Lower leg skin (tissue), 4 donors: ENCODE measurements at regions of chr2 and their contacts with region 1.

Region 1: GRCh38 chr2:217510771-217511291 is 492.0 kb downstream of the TNS1 start:
- DNase-seq: peak in 1 of 2 donors; percentile 67
- H3K4me3 ChIP-seq: no peak overlapping the region
- CTCF ChIP-seq: peak in 1 of 3 donors; percentile 75
- POLR2A ChIP-seq: no peak

Region 2: GRCh38 chr2:216698895-216699294 is 811.9 kb before region 1 on chr2:
- intact Hi-C with region 1: loop called (anchors 5 kb)
- DNase-seq: no peak
- H3K4me3 ChIP-seq: no peak overlapping the region
- CTCF ChIP-seq: no peak
- POLR2A ChIP-seq: no peak

Region 3: DNA sequence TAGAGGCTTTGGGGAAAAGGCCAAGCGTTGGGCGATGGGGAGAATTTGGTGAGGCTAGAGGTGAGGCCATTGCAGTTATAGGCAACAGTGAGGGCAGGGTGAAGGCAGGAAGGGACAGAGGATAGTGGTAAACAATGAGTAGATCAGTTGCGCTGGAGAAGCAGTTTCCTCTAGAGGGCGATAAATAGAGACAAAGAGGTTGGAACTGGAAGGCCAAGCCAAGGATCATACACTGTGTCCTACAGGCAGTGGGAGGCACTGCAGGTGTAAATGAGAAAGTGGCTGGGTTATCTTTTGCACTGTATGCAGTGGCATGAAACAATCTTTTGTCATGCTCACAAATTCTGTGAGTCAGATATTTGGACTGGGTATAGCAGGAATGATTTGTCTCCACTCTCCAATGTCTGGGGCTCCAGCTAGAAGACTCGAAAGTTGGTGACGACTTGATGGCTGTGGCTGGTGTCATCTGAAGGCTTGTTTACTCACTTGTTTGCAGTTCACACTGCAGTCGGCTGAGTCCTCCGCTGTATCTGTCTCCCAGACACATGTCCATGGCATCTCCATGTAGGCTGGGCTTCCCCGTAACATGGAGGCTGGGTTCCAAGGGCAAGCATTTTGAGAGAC is 733.1 kb before region 1 on chr2:
- intact Hi-C with region 1: no loop called
- DNase-seq: no peak
- H3K4me3 ChIP-seq: no peak overlapping the region
- CTCF ChIP-seq: peak in 1 of 3 donors; percentile 30
- POLR2A ChIP-seq: no peak

Region 4: GRCh38 chr2:217559084-217559483 is 48.3 kb after region 1 on chr2:
- intact Hi-C with region 1: no loop called
- DNase-seq: no peak
- H3K4me3 ChIP-seq: no peak overlapping the region
- CTCF ChIP-seq: no peak
- POLR2A ChIP-seq: no peak